A549 (cell line): ENCODE measurements at regions of chr4 and their contacts with region 1.

Region 1: GRCh38 chr4:87985097-87985886 is 9.8 kb downstream of the SPP1 start:
- DNase-seq: peak; percentile 44 to 74
- ATAC-seq: peak; percentile 100
- H3K4me3 ChIP-seq: no peak overlapping the region
- H3K27ac ChIP-seq: peak overlapping the region; percentile 21 to 73; a peak in 3 of 6 replicates
- H3K4me1 ChIP-seq: peaks cover 6% of the 10 kb centered on the region; the same call in 1 of the 3 replicates
- CTCF ChIP-seq: peak; percentile 73
- EP300 ChIP-seq: no peak
- POLR2A ChIP-seq: no peak
- RAD21 ChIP-seq: peak; percentile 78

Region 2: DNA sequence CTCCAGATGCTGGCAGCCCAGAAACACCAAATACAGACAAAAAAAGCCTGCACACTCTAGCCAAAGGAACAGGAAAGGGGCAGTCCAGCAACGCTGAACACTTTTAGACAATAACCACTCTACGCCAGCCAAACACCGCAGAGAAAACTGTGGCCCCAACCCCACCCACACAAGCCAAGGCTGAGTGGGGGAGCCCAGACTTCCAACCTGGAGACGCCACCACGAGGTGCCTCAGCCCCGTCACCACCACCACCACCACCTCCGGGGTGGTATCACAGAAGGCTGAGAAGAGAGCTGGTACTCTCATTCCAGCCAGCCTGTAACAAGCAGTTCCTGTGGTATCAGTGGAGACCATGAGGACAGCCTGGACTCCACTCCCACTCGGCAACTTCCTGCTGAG is 129.7 kb before region 1 on chr4:
- CTCF ChIA-PET with region 1: interaction called, 142 read pairs
- POLR2A ChIA-PET with region 1: no interaction called
- DNase-seq: no peak
- ATAC-seq: no peak
- H3K4me3 ChIP-seq: no peak overlapping the region
- H3K27ac ChIP-seq: no peak overlapping the region
- H3K4me1 ChIP-seq: peaks cover 2% of the 10 kb centered on the region; the same call in 1 of the 3 replicates
- CTCF ChIP-seq: no peak
- EP300 ChIP-seq: no peak
- POLR2A ChIP-seq: no peak
- RAD21 ChIP-seq: no peak

Region 3: GRCh38 chr4:88043001-88043400 is 57.7 kb after region 1 on chr4:
- CTCF ChIA-PET with region 1: no interaction called
- POLR2A ChIA-PET with region 1: no interaction called
- DNase-seq: no peak
- ATAC-seq: no peak
- H3K4me3 ChIP-seq: no peak overlapping the region
- H3K27ac ChIP-seq: no peak overlapping the region
- H3K4me1 ChIP-seq: no peaks in the 10 kb centered on the region
- CTCF ChIP-seq: no peak
- EP300 ChIP-seq: no peak
- POLR2A ChIP-seq: no peak
- RAD21 ChIP-seq: no peak

Region 4: GRCh38 chr4:88616275-88617150 is 631.2 kb after region 1 on chr4:
- CTCF ChIA-PET with region 1: no interaction called
- POLR2A ChIA-PET with region 1: interaction called, 10 read pairs
- DNase-seq: peak in 1 of 2 experiments; percentile 36
- ATAC-seq: peak; percentile 59 to 67; a peak in 5 of 6 replicates
- H3K4me3 ChIP-seq: no peak overlapping the region
- H3K27ac ChIP-seq: peak overlapping the region; percentile 63 to 82
- H3K4me1 ChIP-seq: peaks cover 71% of the 10 kb centered on the region
- CTCF ChIP-seq: no peak
- EP300 ChIP-seq: peak in 1 of 2 experiments; percentile 27; a peak in 1 of 5 replicates
- POLR2A ChIP-seq: no peak
- RAD21 ChIP-seq: no peak